Gastrocnemius medialis (tissue), 4 donors: ENCODE measurements at regions of chr22 and their contacts with region 1.

Region 1: GRCh38 chr22:28925916-28926315 is 42.5 kb downstream of the ZNRF3 start:
- DNase-seq: no peak
- ATAC-seq: no peak
- H3K4me3 ChIP-seq: no peak overlapping the region
- H3K27ac ChIP-seq: no peak overlapping the region
- H3K4me1 ChIP-seq: peaks cover 48 to 51% of the 10 kb centered on the region in 2 donors
- H3K27me3 ChIP-seq: no peaks in the 10 kb centered on the region
- CTCF ChIP-seq: no peak
- POLR2A ChIP-seq: no peak

Region 2: GRCh38 chr22:28882878-28883656 is 42.8 kb before region 1 on chr22 and contains the start of gene ZNRF3:
- in situ Hi-C with region 1: no loop called
- intact Hi-C with region 1: loop called (anchors 5 kb)
- DNase-seq: peak; percentile 89 to 91
- ATAC-seq: peak; percentile 87 to 88
- H3K4me3 ChIP-seq: peak within 1 kb of the TSS; percentile 69 to 96 (median 79)
- H3K27ac ChIP-seq: peak within 1 kb of the TSS; percentile 66 to 76 (median 76)
- H3K4me1 ChIP-seq: peaks cover 12 to 34% of the 10 kb centered on the region in 2 donors
- H3K27me3 ChIP-seq: no peaks in the 10 kb centered on the region
- CTCF ChIP-seq: peak in 1 of 5 experiments; percentile 14
- POLR2A ChIP-seq: peak; percentile 83
- total RNA-seq, gene ZNRF3: 7.8 to 19.1 (median 11.1) TPM